PC-9 (cell line): ENCODE measurements at regions of chr2 and their contacts with region 1.

Region 1: GRCh38 chr2:142321706-142322280 is 191.0 kb upstream of the LRP1B start:
- DNase-seq: no peak
- H3K4me3 ChIP-seq: no peak overlapping the region
- H3K27ac ChIP-seq: no peak overlapping the region
- H3K4me1 ChIP-seq: peaks cover 18% of the 10 kb centered on the region
- H3K27me3 ChIP-seq: no peaks in the 10 kb centered on the region
- CTCF ChIP-seq: no peak

Region 2: GRCh38 chr2:142190805-142191204 is 131.0 kb before region 1 on chr2:
- CTCF ChIA-PET with region 1: no interaction called
- POLR2A ChIA-PET with region 1: no interaction called
- intact Hi-C with region 1: loop called (anchors 5 kb)
- DNase-seq: peak in 1 of 2 experiments; percentile 10
- H3K4me3 ChIP-seq: no peak overlapping the region
- H3K27ac ChIP-seq: no peak overlapping the region
- H3K4me1 ChIP-seq: peaks cover 5% of the 10 kb centered on the region; the same call in 1 of the 2 replicates
- H3K27me3 ChIP-seq: no peaks in the 10 kb centered on the region
- CTCF ChIP-seq: no peak

Region 3: GRCh38 chr2:142306126-142306525 is 15.7 kb before region 1 on chr2:
- CTCF ChIA-PET with region 1: no interaction called
- POLR2A ChIA-PET with region 1: no interaction called
- intact Hi-C with region 1: loop called (anchors 2 kb)
- DNase-seq: no peak
- H3K4me3 ChIP-seq: no peak overlapping the region
- H3K27ac ChIP-seq: no peak overlapping the region
- H3K4me1 ChIP-seq: no peaks in the 10 kb centered on the region
- H3K27me3 ChIP-seq: no peaks in the 10 kb centered on the region
- CTCF ChIP-seq: no peak

Region 4: DNA sequence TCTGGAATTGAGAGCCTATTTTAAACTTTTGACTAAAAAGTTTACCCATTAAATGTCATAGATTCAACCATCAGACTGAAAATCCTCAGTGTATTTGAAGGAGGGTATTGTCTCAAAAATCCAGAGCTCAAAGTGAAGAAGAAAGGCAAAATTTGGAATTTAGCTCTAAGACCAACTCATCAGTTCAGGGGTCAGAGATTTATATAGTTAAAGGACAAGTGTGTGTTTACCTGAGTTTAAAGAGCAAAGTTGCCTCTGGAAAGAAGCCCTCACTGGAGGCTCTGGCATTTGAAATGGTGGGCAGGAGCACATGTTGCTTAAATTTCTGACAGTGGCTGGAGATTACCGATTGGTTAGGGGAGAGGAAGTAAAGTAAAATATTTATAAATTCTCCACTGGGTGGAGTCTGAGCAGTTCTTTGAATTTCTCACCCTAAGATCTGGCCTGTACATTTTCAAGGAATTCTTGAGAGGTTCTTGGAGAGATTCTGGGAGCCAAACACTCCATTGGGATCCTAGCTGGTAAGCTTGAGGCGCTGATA is 555.5 kb after region 1 on chr2 and contains the start of gene KYNU:
- CTCF ChIA-PET with region 1: no interaction called
- POLR2A ChIA-PET with region 1: no interaction called
- intact Hi-C with region 1: no loop called
- DNase-seq: no peak
- H3K4me3 ChIP-seq: no peak within 1 kb of the TSS
- H3K27ac ChIP-seq: no peak within 1 kb of the TSS; the same call in 1 of the 2 replicates
- H3K4me1 ChIP-seq: peaks cover 43% of the 10 kb centered on the region
- H3K27me3 ChIP-seq: no peaks in the 10 kb centered on the region
- CTCF ChIP-seq: no peak
- total RNA-seq, gene KYNU: 44.5 and 55.7 TPM in 2 replicates

Region 5: DNA sequence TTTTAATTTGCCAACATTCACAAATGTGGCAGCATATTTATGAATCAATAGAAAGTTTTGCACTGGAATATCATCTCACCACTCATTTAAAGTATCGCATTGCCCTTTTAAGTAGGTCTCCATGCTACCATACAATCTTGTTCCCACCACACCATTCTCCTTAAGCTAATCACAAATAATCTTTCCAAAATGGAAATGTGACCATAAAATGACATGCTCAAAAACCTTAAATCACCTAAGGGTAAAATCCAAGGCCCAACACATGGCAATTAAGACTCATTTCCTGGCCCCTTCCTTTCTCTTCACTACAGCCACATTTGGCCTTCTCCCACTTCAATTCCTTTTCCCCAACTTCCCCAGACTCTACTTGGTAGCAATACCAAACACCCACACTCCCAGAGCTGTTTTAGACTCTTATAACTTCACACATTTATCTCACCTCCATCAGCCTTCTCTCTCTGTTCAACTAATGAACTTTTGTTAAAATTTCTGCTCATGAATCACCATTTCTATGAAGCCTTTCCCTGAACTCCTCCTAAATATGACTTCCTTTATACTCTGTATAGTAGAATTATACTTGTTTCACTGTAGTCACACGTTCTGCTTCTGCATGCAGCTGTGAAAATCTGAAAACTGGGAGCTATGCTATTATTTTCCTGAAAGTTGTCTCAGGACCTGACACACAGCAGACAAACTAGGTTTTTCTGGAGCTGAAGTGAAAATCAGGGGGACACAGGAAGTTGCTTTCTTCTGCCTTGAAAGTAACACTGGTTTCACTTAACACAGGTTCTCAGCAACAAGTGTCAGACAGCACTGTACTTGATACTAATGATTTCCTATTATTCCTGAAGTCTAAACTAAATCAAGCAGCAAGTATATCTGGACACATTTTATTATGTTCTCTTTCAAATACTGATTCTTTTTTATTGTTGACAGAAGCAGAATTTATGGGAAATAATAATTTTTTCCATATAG is 1894.2 kb after region 1 on chr2:
- CTCF ChIA-PET with region 1: no interaction called
- POLR2A ChIA-PET with region 1: no interaction called
- intact Hi-C with region 1: no loop called
- DNase-seq: no peak
- H3K4me3 ChIP-seq: no peak overlapping the region
- H3K27ac ChIP-seq: no peak overlapping the region
- H3K4me1 ChIP-seq: 0 out of 2 replicates have a peak, but pooled peaks cover 6% of the 10 kb centered on the region
- H3K27me3 ChIP-seq: no peaks in the 10 kb centered on the region
- CTCF ChIP-seq: no peak